ENCODE measurements at regions of chr3 and their contacts with region 1.

Region 1: GRCh38 chr3:143972505-143973255 is 1.1 kb downstream of the DIPK2A start:
- DNase-seq: peak; percentile 87
- H3K4me3 ChIP-seq: peak overlapping the region; percentile 89
- H3K27ac ChIP-seq: peak overlapping the region; percentile 94
- H3K4me1 ChIP-seq: peaks cover 31% of the 10 kb centered on the region
- CTCF ChIP-seq: peak; percentile 67

Region 2: GRCh38 chr3:142028243-142028777 is 1944.4 kb before region 1 on chr3:
- CTCF ChIA-PET with region 1: no interaction called
- POLR2A ChIA-PET with region 1: no interaction called
- intact Hi-C with region 1: loop called (anchors 10 kb)
- DNase-seq: peak; percentile 92
- H3K4me3 ChIP-seq: peak overlapping the region; percentile 84
- H3K27ac ChIP-seq: peak overlapping the region; percentile 80
- H3K4me1 ChIP-seq: peaks cover 57% of the 10 kb centered on the region
- CTCF ChIP-seq: no peak

Region 3: DNA sequence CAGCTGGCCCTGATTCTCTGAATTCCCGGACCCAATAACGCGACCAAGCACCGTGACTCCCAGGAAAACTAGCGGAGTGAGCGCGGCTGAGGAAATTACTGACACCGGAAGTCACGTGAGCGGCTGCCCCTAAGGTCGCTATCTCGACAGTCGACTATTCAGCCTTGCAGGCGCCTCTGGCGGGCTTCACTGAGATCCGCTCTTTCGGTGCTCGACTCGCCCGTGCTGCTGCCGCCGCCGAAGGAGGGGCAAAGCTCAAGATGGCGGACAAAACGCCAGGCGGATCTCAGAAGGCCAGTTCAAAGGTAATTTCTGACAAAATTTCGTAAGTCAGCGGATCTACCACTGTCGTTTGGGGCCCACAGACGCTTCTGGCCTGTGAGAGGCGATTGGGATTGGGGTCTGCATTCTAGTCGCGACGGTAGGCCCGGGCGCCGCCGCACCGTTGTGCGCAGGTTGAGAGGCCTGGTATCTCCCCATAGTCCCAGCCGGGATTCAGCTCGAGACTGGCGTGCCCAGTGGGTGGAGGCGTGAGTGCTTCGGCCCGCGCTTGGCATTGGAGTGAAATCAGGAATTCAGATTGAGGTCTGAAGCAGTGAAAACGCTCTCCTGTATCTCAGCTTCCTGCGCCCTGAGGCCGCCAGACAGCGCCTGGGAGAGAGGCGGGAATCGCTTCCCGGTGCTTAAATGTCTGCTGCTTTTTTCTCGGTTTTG is 971.2 kb before region 1 on chr3 and contains the start of gene U2SURP:
- CTCF ChIA-PET with region 1: no interaction called
- POLR2A ChIA-PET with region 1: interaction called, 4 read pairs
- intact Hi-C with region 1: loop called (anchors 2 kb)
- DNase-seq: peak; percentile 96
- H3K4me3 ChIP-seq: peak within 1 kb of the TSS; percentile 100
- H3K27ac ChIP-seq: peak within 1 kb of the TSS; percentile 82
- H3K4me1 ChIP-seq: peaks cover 25% of the 10 kb centered on the region
- CTCF ChIP-seq: no peak
- total RNA-seq, gene U2SURP: 108 and 115 TPM in 2 replicates

Region 4: DNA sequence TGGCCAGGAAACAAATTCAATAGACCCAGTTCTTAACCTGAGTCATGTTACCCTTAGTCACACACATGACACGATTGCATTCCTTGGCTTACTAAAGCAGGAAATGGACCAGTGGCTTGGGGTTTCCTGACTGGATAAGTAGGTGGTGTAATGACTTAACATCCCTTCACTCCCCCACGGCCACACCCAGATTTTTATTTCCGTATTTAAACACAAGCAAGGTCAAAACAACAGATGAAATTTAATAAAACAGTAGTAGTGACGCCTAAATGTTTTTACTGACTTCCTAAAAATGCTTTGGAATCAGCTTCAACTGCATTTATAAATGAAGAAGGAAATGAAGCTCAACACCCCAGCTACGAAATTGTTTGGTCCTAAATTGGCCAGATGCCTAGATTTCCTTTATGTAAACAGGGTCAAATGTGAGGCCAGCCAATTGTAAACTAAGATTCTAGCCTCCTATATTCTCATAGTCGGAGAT is 528.8 kb before region 1 on chr3:
- CTCF ChIA-PET with region 1: no interaction called
- POLR2A ChIA-PET with region 1: no interaction called
- intact Hi-C with region 1: no loop called
- DNase-seq: no peak
- H3K4me3 ChIP-seq: no peak overlapping the region
- H3K27ac ChIP-seq: no peak overlapping the region
- H3K4me1 ChIP-seq: no peaks in the 10 kb centered on the region
- CTCF ChIP-seq: no peak

Region 5: DNA sequence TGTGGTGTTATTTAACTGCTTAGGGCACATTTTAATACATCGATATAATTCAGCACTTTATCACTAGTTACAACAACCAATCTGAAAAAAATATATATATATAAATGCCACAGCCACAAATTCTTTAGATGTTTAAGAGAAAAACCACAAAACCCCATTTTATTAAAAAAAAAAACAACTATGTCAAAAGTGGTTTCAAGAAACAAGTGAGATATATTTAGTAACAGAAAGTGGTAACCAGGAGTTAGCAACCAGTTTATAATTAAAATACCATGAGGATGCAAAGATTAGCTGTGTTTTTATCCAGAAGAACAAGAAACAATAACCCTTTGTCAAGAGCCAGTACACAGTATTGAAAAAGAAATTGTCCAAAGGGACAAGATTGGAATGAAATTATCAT is 15.8 kb before region 1 on chr3:
- CTCF ChIA-PET with region 1: no interaction called
- POLR2A ChIA-PET with region 1: interaction called, 25 read pairs
- intact Hi-C with region 1: no loop called
- DNase-seq: no peak
- H3K4me3 ChIP-seq: no peak overlapping the region
- H3K27ac ChIP-seq: no peak overlapping the region
- H3K4me1 ChIP-seq: no peaks in the 10 kb centered on the region
- CTCF ChIP-seq: no peak

Region 6: GRCh38 chr3:144028798-144029411 is 56.2 kb after region 1 on chr3:
- CTCF ChIA-PET with region 1: interaction called, 3 read pairs
- POLR2A ChIA-PET with region 1: interaction called, 15 read pairs
- intact Hi-C with region 1: loop called (anchors 2 kb)
- DNase-seq: peak; percentile 68
- H3K4me3 ChIP-seq: no peak overlapping the region
- H3K27ac ChIP-seq: peak overlapping the region; percentile 48
- H3K4me1 ChIP-seq: peaks cover 17% of the 10 kb centered on the region
- CTCF ChIP-seq: no peak

Measured in OCI-LY7 (cell line).